ENCODE measurements at regions of chr19 and their contacts with region 1.

Region 1: GRCh38 chr19:41859618-41860418 is at the start of gene RPS19:
- DNase-seq: peak; percentile 99
- ATAC-seq: peak; percentile 89
- H3K4me3 Mint-ChIP-seq: peak within 1 kb of the TSS; percentile 86
- H3K27ac Mint-ChIP-seq: peak within 1 kb of the TSS; percentile 98
- H3K4me1 Mint-ChIP-seq: peaks cover 46% of the 10 kb centered on the region
- H3K27me3 Mint-ChIP-seq: no peaks in the 10 kb centered on the region
- total RNA-seq, gene RPS19: 2,342 to 3,204 TPM

Region 2: DNA sequence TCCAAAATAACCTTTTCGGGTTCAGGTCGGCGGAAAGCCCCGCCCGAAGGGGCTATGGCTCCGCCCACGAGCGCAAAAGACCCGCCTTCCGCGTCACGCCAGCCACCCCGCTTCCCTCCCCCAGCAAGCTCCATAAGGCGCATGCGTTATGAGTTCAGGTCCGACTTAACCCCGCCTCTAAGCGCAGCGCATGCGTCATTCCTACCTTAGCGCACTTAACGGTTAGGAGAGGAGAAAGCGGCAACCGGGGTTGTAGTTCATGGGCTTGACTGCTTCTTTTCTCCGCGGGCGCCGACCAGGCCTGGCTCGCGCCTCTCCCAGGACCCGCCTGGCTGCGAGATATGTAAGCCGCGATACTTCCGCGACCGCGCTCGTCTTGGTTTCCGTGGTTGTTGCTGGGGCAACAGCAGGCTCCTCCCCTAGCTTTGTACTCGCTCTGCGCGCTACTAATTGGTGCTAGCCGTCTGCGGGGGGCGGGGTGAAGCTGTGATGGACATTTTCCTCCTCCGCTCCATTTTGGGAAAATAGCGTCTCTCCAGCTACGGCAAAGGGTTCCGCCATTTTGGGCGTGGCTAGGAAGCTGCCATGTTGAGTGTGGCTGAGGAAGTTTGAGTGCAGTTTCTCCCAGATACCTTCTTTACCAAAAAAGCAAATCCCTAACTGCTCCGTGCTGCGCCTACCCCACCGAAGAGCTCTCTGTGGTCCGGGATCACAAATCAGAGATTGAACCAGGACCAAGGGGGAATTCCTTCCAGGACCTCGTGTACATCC is 495.9 kb before region 1 on chr19 and contains the start of gene B9D2:
- CTCF ChIA-PET with region 1: no interaction called
- POLR2A ChIA-PET with region 1: no interaction called
- intact Hi-C with region 1: loop called in 1 of 2 experiments (anchors 1 kb)
- DNase-seq: peak; percentile 99
- ATAC-seq: peak; percentile 95
- H3K4me3 Mint-ChIP-seq: peak within 1 kb of the TSS; percentile 92
- H3K27ac Mint-ChIP-seq: peak within 1 kb of the TSS; percentile 98
- H3K4me1 Mint-ChIP-seq: peaks cover 29% of the 10 kb centered on the region
- H3K27me3 Mint-ChIP-seq: no peaks in the 10 kb centered on the region
- total RNA-seq, gene B9D2: 4.0 to 5.2 TPM

Region 3: GRCh38 chr19:41801792-41802211 is 58.0 kb before region 1 on chr19:
- CTCF ChIA-PET with region 1: no interaction called
- POLR2A ChIA-PET with region 1: no interaction called
- intact Hi-C with region 1: no loop called
- DNase-seq: no peak
- ATAC-seq: peak; percentile 51
- H3K4me3 Mint-ChIP-seq: no peak overlapping the region
- H3K27ac Mint-ChIP-seq: no peak overlapping the region
- H3K4me1 Mint-ChIP-seq: peaks cover 17% of the 10 kb centered on the region
- H3K27me3 Mint-ChIP-seq: peaks cover 2% of the 10 kb centered on the region

Region 4: DNA sequence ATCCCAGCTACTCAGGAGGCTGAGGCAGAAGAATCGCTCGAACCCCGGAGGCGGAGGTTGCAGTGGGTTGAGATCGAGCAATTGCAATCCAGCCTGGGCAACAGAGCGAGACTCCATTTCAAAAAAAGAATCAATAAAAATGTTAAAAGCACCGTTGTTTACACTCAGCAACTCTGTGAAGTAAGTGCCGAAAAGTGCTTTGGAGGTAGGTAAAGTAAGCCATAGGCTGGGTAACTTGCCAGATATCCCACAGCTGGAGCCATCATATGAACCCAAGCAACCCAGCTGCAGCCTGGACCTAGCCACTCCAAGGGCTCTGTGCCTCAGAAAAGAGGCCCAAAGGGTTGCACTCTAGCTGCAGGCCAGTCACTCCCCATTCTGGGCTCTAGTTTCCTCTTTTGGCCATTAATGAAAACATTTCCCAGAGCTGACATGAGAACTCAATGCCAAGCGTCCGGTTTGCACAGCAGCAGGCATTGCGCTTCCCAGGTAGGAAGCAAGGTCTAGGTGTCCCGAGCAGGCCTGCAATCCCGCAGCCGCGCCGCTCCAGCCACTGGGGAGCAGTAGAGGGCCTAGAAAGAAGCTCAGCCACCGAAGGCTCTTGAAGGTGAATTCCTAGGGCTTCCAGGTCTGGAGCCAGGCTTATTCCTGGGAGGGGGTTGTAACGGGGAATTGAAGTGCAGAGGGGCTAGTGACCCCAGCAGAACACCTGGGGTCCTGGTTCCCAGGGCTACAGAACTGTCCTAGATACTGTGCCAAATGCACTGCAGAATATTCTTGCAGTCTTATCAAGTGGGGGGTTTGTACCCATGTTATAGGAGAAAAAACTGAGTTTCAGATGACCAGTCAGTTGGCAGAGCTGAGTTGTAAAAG is 13.2 kb after region 1 on chr19:
- CTCF ChIA-PET with region 1: interaction called, 14 read pairs
- POLR2A ChIA-PET with region 1: interaction called, 40 read pairs
- intact Hi-C with region 1: loop called (anchors 1 kb)
- DNase-seq: peak; percentile 84
- ATAC-seq: no peak
- H3K4me3 Mint-ChIP-seq: no peak overlapping the region
- H3K27ac Mint-ChIP-seq: peak overlapping the region; percentile 88
- H3K4me1 Mint-ChIP-seq: peaks cover 84% of the 10 kb centered on the region
- H3K27me3 Mint-ChIP-seq: no peaks in the 10 kb centered on the region

Region 5: DNA sequence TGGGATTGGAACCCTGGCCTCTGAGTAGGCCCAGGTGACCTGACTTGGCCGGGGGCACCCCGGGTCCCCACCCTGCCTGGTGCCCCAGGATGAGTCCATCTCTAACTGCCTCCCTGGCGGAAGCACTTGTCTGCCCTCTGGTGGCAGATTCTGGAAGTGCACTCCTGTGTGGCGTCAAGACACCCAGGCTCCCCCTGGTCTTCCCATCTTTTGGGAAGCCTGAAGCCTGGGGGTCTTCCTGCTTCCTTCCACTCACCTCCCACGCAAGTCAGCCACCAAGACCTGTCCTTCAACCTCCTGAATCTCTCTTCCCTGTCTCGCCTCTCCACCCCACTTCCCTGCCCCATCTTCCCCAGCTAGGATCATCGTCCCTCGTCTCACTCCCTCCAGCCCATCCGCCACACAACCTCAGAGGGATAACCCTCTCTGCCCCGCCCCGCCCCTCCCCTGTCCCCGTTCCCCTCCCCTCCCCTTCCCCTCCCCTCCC is 91.9 kb after region 1 on chr19:
- CTCF ChIA-PET with region 1: interaction called, 14 read pairs
- POLR2A ChIA-PET with region 1: no interaction called
- intact Hi-C with region 1: loop called in 1 of 2 experiments (anchors 1 kb)
- DNase-seq: peak; percentile 94
- ATAC-seq: peak; percentile 90
- H3K4me3 Mint-ChIP-seq: no peak overlapping the region
- H3K27ac Mint-ChIP-seq: peak overlapping the region; percentile 7
- H3K4me1 Mint-ChIP-seq: peaks cover 15% of the 10 kb centered on the region
- H3K27me3 Mint-ChIP-seq: no peaks in the 10 kb centered on the region

Region 6: GRCh38 chr19:41991026-41991448 is 131.2 kb after region 1 on chr19:
- CTCF ChIA-PET with region 1: no interaction called
- POLR2A ChIA-PET with region 1: no interaction called
- intact Hi-C with region 1: no loop called
- DNase-seq: no peak
- ATAC-seq: no peak
- H3K4me3 Mint-ChIP-seq: no peak overlapping the region
- H3K27ac Mint-ChIP-seq: no peak overlapping the region
- H3K4me1 Mint-ChIP-seq: peaks cover 12% of the 10 kb centered on the region
- H3K27me3 Mint-ChIP-seq: peaks cover 17% of the 10 kb centered on the region

Region 7: GRCh38 chr19:42140125-42140754 is 280.4 kb after region 1 on chr19:
- CTCF ChIA-PET with region 1: no interaction called
- POLR2A ChIA-PET with region 1: no interaction called
- intact Hi-C with region 1: no loop called
- DNase-seq: peak; percentile 61
- ATAC-seq: peak; percentile 70
- H3K4me3 Mint-ChIP-seq: no peak overlapping the region
- H3K27ac Mint-ChIP-seq: no peak overlapping the region
- H3K4me1 Mint-ChIP-seq: peaks cover 6% of the 10 kb centered on the region
- H3K27me3 Mint-ChIP-seq: no peaks in the 10 kb centered on the region

Region 8: GRCh38 chr19:42244347-42245220 is 384.8 kb after region 1 on chr19:
- CTCF ChIA-PET with region 1: interaction called, 5 read pairs
- POLR2A ChIA-PET with region 1: interaction called, 4 read pairs
- intact Hi-C with region 1: loop called in 1 of 2 experiments (anchors 1 kb)
- DNase-seq: peak; percentile 96
- ATAC-seq: peak; percentile 49
- H3K4me3 Mint-ChIP-seq: peak overlapping the region; percentile 93
- H3K27ac Mint-ChIP-seq: peak overlapping the region; percentile 94
- H3K4me1 Mint-ChIP-seq: peaks cover 42% of the 10 kb centered on the region
- H3K27me3 Mint-ChIP-seq: no peaks in the 10 kb centered on the region

Region 9: GRCh38 chr19:42325273-42325895 is 465.6 kb after region 1 on chr19 and contains the start of gene MEGF8:
- CTCF ChIA-PET with region 1: no interaction called
- POLR2A ChIA-PET with region 1: interaction called, 3 read pairs
- intact Hi-C with region 1: loop called in 1 of 2 experiments (anchors 1 kb)
- DNase-seq: peak; percentile 99
- ATAC-seq: peak; percentile 98
- H3K4me3 Mint-ChIP-seq: peak within 1 kb of the TSS; percentile 80
- H3K27ac Mint-ChIP-seq: peak within 1 kb of the TSS; percentile 69
- H3K4me1 Mint-ChIP-seq: peaks cover 12% of the 10 kb centered on the region
- H3K27me3 Mint-ChIP-seq: peaks cover 12% of the 10 kb centered on the region
- total RNA-seq, gene MEGF8: 5.2 to 5.3 TPM

Measured in activated CD4-positive, alpha-beta T cell treated with anti-CD3 and anti-CD28 coated beads for 36 hours (primary cell).